Activated CD4-positive, alpha-beta memory T cell treated with anti-CD3 and anti-CD28 coated beads for 36 hours (primary cell): ENCODE measurements at regions of chr12 and their contacts with region 1.

Region 1: DNA sequence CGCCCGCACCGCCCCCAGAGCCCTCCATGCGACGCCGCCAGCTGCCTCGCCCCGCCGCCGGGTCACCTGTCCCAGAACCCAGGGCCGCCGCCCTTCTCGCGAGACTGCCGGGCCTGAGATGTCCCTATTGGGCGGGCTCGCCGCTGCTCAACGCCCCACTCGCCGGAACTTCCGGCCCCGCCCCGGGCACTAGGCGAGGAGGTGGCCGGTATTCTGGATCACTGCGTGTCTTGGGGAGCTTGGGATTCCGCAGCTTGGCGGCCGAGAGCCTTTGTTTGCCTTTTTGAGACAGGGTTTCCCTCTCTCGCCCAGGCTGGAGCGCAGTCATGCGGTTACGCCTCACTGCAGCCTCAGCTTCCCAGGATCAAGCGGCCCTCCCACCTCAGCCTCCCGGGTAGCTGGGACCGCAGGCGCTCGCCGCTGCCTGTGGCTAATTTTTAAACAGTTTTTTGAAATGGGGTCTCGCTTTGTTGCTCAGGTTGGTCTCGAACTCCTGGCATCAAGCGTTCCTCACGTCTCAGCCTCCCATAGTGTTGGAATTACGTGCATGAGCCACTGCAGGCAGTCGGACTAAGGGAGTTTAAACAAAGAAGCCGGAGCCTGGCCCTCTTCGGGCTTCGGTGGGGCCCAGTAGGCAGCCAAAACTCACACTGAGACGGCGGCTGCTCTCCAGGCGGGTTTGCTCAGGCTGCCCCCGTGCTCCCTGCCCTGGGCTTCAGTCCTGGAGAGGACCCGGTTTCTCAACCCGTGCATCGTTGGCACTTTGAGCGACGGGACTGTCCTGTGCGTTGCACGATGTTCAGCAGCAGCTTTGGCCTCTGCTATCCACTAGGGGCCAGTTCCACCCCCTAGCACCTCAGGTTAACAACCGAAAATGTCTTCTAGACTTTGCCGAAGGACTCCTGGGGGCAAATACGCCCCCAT is at the start of gene SLC15A4:
- DNase-seq: peak; percentile 95
- H3K4me3 Mint-ChIP-seq: peak within 1 kb of the TSS; percentile 78
- H3K27ac Mint-ChIP-seq: no peak within 1 kb of the TSS
- H3K4me1 Mint-ChIP-seq: peaks cover 27% of the 10 kb centered on the region
- H3K27me3 Mint-ChIP-seq: peaks cover 5% of the 10 kb centered on the region
- total RNA-seq, gene SLC15A4: 15.5 to 19.3 TPM

Region 2: GRCh38 chr12:128743001-128743400 is 81.2 kb before region 1 on chr12:
- CTCF ChIA-PET with region 1: no interaction called
- POLR2A ChIA-PET with region 1: no interaction called
- intact Hi-C with region 1: no loop called
- DNase-seq: no peak
- H3K4me3 Mint-ChIP-seq: no peak overlapping the region
- H3K27ac Mint-ChIP-seq: no peak overlapping the region
- H3K4me1 Mint-ChIP-seq: no peaks in the 10 kb centered on the region
- H3K27me3 Mint-ChIP-seq: peaks cover 4% of the 10 kb centered on the region

Region 3: DNA sequence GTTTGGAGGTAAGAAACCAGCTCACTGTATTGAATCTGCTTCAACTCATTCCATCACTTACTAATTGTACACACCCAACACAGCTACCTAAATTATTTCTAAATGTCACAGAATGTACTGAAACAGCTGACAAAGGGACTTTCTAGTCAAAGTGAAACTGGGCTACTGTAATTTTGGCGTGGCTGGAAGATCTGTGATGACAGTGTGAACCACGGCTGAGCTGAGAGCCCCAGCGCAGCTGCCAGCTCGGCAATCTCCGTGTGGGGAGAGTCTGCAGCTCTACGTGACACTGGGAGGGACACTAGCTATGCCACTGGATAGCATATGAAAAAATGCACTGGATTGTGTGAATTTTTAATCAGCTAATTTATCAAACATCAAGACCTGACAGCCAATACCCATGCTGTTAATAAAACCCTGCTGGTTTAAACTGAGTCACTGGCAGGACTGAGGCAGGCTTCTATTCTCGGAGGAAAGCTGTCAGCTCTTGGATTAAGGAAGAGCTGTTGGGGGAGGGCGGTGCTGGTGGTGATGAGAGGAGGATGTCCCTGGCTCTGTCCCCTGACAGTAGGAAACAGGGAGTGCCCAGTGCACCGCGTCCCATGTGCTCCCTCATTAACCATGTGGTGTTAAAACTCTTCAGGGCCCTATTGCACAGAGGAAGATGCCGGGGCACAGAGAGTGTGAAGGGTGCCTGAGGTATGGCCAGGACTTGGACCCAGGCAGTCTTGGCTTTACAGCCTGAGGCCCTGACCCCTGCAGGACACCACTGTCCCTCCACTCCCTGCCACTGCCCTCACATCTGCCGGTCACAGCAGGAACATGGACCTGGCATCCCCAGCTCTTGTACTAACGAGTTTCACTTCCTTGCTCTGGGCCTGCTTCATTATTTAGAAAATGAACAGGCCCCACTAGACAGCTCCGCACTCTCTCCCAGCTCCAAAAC is 13.7 kb before region 1 on chr12:
- CTCF ChIA-PET with region 1: interaction called, 4 read pairs
- POLR2A ChIA-PET with region 1: interaction called, 10 read pairs
- intact Hi-C with region 1: loop called (anchors 2 kb)
- DNase-seq: peak; percentile 46
- H3K4me3 Mint-ChIP-seq: no peak overlapping the region
- H3K27ac Mint-ChIP-seq: no peak overlapping the region
- H3K4me1 Mint-ChIP-seq: peaks cover 30% of the 10 kb centered on the region
- H3K27me3 Mint-ChIP-seq: no peaks in the 10 kb centered on the region

Region 4: GRCh38 chr12:128914908-128915563 is 90.9 kb after region 1 on chr12:
- CTCF ChIA-PET with region 1: no interaction called
- POLR2A ChIA-PET with region 1: no interaction called
- intact Hi-C with region 1: loop called (anchors 5 kb)
- DNase-seq: peak; percentile 31
- H3K4me3 Mint-ChIP-seq: no peak overlapping the region
- H3K27ac Mint-ChIP-seq: no peak overlapping the region
- H3K4me1 Mint-ChIP-seq: peaks cover 3% of the 10 kb centered on the region
- H3K27me3 Mint-ChIP-seq: peaks cover 8% of the 10 kb centered on the region